Transverse colon (tissue), 4 donors: ENCODE measurements at regions of chr19 and their contacts with region 1.

Region 1: GRCh38 chr19:7792253-7792652 is 29.2 kb downstream of the CLEC4M start:
- DNase-seq: no peak
- H3K4me3 ChIP-seq: no peak overlapping the region
- H3K27ac ChIP-seq: no peak overlapping the region
- H3K4me1 ChIP-seq: peaks cover 0 to 7% (median 6%) of the 10 kb centered on the region in 4 donors
- H3K27me3 ChIP-seq: peaks cover 50% of the 10 kb centered on the region
- CTCF ChIP-seq: no peak
- EP300 ChIP-seq: no peak
- POLR2A ChIP-seq: no peak

Region 2: DNA sequence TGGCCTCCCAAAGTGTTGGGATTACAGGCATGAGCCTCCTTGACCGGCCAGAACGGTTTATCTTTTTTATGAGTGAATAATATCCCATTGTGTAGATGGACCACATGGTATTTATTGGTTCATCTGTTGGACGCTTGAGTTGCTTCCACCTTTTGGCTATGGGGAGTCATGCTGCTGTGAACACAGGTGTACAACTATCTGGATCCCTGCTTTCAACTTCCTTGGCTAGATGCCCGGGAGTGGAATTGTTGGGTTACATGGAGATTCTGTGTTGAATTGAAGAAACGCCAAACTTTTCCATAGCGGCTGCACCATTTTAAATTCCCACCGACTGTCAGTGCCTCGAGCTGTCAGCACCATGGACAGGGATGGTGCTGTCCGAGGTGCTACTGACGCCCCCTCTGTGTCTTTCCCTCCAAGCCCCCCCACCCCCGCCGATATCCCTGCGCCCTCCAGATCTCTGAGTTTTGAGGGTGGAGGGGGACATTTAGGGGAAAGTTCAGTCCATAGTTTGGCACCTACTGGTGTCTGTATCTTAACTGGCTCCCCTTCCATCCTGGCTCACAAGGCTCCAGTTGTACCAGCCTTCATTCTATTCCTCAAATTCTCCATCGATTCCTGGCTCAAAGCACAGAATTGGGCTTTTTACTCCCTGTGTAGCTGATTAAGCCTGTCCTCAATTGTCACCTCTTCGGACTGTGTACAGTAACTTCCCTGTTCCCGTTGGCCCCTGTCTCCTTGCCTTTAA is 229.4 kb before region 1 on chr19:
- in situ Hi-C with region 1: loop called in 1 of 4 experiments (anchors 5 kb)
- intact Hi-C with region 1: no loop called
- DNase-seq: no peak
- H3K4me3 ChIP-seq: no peak overlapping the region
- H3K27ac ChIP-seq: no peak overlapping the region
- H3K4me1 ChIP-seq: no peaks in the 10 kb centered on the region
- H3K27me3 ChIP-seq: no peaks in the 10 kb centered on the region
- CTCF ChIP-seq: no peak
- EP300 ChIP-seq: no peak
- POLR2A ChIP-seq: no peak